Activated CD4-positive, alpha-beta memory T cell treated with anti-CD3 and anti-CD28 coated beads for 36 hours (primary cell): ENCODE measurements at regions of chr15 and their contacts with region 1.

Region 1: DNA sequence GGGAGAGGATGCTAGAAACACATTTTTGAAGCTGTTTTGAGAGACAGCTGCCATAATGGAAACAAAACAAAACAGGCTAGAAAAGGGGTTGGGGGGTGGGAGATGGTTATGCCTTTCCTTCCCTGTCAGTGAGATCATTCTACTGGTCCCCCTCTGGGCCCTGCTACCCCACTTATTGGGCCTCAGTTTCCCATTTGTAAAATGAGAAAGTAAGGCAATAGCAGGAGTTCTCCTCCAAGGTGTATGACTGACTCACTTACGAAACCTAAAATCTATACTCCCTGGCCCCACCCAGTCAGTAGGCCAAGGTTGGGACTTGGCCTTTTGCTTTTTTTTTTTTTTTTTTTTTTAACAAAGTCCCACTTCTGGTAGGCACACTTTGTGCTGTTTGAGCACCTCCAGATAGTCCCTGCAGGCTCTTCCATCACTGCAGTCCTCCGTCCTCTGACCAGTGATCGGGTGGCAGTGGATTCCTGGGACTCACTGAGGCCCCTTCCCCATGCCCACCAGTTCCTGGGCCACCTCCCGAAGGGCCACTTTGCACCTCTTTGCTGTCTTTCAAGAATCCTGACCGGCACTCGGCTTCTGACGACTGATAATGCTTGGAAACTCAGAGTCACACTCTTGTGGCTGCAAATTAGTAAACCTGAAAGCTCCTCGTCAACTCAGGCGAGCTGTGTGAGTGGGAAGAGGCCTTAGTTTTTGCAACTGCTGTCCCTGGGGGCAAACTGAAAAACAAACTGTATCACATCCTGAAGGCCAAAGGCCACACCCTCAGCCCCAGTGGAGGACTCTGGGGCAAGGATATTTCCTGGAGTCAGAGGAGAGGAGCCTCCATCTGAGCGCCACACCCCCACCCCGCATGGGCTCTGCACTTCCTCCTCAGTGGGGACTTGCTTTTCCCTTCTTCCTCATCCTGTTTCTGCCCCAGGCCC is 6.7 kb upstream of the PSTPIP1 start:
- DNase-seq: peak; percentile 92
- H3K4me3 Mint-ChIP-seq: peak overlapping the region; percentile 67
- H3K27ac Mint-ChIP-seq: peak overlapping the region; percentile 100
- H3K4me1 Mint-ChIP-seq: peaks cover 49% of the 10 kb centered on the region
- H3K27me3 Mint-ChIP-seq: no peaks in the 10 kb centered on the region

Region 2: DNA sequence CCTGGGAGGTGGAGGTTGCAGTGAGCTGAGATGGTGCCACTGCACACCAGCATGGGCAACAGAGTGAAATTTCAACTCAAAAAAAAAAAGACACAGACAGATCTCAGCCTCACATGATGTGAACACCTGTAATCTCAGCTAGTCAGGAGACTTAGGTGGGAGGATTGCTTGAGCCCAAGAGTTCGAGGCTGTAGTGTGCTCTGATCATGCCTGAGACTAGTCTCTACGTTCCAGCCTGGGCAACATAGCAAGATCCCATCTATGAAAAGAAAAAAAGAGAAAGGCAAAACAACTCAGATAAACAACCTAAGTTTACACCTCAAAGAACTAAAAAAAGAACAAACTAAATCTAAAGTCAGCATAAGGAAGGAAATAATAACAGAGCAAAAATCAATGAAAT is 94.0 kb before region 1 on chr15:
- CTCF ChIA-PET with region 1: no interaction called
- POLR2A ChIA-PET with region 1: no interaction called
- intact Hi-C with region 1: no loop called
- DNase-seq: no peak
- H3K4me3 Mint-ChIP-seq: no peak overlapping the region
- H3K27ac Mint-ChIP-seq: no peak overlapping the region
- H3K4me1 Mint-ChIP-seq: peaks cover 25% of the 10 kb centered on the region
- H3K27me3 Mint-ChIP-seq: no peaks in the 10 kb centered on the region

Region 3: DNA sequence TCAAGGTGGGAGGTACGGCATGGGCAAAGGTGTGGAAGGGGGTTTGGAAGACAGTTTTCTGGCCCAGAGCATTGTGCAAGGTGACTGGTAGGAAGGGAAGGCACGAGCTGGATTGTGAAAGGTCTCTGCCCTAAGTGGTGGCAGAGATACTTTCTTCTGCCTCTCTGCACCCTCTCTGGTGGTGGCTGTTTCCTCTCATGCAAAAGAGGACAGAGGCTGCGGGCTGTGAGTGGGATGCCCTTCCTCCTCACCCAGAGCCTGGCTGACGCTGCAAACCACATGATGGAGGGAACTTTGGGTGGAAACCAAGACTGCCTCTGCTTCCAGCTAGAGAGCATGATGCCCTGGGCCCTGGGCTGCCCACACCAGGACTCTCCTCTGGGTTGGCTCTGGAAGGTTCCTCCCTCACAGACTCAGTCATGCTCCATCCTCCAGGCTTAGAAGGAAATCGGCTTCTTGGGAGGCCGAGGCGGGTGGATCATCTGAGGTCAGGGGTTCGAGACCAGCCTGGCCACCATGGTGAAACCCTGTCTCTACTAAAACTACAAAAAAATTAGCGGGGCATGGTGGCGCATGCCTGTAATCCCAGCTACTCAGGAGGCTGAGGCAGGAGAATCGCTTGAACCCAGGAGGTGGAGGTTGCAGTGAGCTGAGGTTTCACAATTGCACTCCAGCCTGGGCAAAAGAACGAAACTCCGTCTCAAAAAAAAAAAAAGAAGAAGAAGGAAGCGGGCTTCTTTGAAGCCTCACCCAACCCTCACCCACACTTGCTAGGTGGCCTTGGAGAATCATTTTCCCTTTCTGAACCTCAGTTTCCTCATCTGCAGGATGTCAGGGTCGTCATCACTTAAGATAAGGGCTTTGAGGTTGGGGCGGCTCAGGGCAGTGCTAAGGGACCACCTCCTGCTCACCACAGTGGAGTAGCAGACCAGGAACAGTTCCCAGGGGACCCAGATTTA is 15.0 kb after region 1 on chr15:
- CTCF ChIA-PET with region 1: interaction called, 20 read pairs
- POLR2A ChIA-PET with region 1: interaction called, 34 read pairs
- intact Hi-C with region 1: loop called (anchors 1 kb)
- DNase-seq: peak; percentile 91
- H3K4me3 Mint-ChIP-seq: peak overlapping the region; percentile 45
- H3K27ac Mint-ChIP-seq: peak overlapping the region; percentile 85
- H3K4me1 Mint-ChIP-seq: peaks cover 91% of the 10 kb centered on the region
- H3K27me3 Mint-ChIP-seq: no peaks in the 10 kb centered on the region